GM13976 (cell line): ENCODE measurements at regions of chr6 and their contacts with region 1.

Region 1: DNA sequence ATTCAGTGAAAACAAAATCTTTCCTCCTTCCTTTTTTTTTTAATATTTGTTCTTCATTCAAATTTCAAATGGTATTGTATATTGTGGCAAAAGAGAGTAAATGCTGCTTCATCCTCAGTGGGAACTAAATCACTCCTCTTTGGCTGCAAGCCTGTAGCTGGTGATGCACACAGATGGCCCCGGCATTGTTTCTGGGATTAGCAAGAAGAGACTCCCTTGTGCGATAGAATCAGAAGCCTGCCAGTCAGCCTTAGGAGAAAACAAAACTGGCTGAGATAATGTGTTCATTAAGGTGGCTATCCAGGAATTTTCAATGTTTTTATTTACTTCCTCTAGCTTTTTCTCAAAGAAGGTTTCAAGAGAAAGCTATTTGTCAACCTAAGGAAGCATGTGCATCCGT is 20.7 kb upstream of the ELOVL2 start:
- DNase-seq: no peak
- CTCF ChIP-seq: no peak

Region 2: DNA sequence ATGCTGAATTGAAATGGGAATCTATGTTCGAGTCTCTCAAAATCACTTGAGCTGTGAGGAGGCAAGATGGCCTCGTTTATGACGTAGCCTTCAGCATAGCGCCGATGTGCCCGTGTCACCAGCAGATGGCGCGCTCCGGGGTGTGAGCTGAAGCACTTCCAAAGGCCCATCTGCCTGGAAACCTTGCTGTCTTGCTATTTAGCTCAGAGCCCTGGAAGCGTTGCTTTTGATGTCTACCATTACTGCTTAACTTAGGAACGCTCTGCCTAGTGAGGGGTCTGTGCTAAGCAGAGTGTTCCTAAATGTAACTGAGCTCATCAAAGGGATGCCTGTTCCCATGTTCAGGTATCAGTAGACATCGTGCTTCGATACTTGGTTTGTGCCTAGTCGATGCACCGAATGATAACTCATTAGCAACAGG is 110.2 kb before region 1 on chr6:
- in situ Hi-C with region 1: loop called (anchors 10 kb)
- DNase-seq: peak; percentile 67
- CTCF ChIP-seq: peak; percentile 81